Spleen (tissue), 13 donors: ENCODE measurements at regions of chr22 and their contacts with region 1.

Region 1: DNA sequence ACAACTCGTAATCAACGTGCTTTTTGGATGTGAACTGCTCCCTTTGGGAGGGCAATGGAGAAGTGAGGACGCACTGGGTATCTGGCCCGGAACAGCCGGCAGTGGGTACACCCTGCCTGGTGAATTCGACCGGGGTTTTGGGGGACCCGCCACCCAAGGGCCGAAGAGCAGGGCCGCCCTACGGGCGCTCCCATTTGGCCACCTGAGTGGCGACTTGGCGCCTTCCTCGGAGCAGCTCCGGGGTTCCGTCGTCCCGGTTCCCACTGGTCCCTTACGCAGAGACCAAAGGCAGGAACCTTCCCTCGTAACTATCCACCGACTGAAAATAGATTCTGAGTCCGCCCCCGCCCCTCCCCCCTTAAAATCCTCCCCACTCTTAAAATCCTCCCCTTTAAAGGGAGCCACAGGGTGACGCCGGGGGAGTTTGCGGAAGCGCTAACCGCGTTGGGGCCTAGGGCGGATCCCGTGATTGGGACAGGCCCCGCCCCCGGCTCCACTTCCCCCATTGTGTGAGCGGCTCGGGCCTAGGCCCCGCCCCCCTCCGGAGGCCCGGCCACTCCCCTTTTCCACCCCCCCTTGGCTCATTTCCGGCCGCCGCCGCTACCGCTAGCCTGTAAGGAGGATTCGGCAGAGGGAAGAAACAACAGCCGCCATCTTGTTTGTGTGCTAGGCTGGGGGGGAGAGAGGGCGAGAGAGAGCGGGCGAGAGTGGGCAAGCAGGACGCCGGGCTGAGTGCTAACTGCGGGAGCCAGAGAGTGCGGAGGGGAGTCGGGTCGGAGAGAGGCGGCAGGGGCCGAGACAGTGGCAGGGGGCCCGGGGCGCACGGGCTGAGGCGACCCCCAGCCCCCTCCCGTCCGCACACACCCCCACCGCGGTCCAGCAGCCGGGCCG is 1.0 kb upstream of the EP300 start:
- DNase-seq: peak; percentile 100
- H3K4me3 ChIP-seq: peak overlapping the region; percentile 72 to 92 (median 82)
- H3K27ac ChIP-seq: peak overlapping the region; percentile 99 to 100 (median 100)
- H3K4me1 ChIP-seq: peaks cover 22 to 44% (median 39%) of the 10 kb centered on the region in 6 donors
- H3K27me3 ChIP-seq: no peaks in the 10 kb centered on the region
- CTCF ChIP-seq: peak in 1 of 11 experiments; percentile 30
- POLR2A ChIP-seq: peak; percentile 62 to 86 (median 84)

Region 2: DNA sequence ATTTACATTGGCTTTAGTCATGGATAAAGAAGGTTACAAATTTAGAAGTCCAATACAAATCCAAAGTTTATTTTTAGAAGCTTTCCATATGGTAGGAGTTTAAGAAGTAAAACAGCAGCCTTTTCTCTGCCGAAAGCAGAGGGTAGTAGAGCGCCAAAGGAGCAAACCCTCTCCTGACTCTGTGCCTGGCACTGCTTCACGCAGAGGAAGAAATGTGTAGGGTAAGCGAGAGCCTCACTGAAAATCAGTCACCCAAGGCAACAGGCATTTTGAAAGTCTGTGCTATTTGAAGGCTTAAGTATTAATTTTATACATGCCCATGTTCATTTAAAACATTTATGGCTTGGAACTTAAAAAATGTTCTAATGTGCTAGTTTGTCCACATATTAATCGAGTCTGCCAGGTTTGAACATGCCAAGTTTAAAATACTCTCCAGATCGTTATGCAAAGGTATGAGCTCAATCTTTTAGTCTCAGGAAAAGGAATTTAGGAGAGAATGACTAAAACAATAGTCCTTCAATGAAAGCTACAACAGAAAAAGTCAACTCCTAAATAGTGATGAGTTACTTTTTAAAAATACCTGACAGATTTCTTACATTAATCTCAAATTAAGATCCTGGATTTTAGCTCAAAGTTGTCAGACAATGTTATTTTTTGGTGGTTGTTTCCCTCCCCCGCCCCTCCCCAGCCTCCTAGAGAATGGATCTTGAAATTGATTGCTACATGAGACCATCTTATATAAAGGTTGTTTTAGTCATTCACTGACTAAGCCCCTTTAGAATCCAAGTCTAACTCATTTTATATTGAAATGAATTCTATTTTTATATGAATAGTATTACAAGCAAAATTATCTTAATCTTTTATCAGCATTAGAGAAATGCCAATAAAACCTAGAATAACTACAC is 493.6 kb before region 1 on chr22:
- intact Hi-C with region 1: no loop called
- DNase-seq: no peak
- H3K4me3 ChIP-seq: no peak overlapping the region
- H3K27ac ChIP-seq: no peak overlapping the region
- H3K4me1 ChIP-seq: peaks cover 0 to 88% (median 51%) of the 10 kb centered on the region in 6 donors
- H3K27me3 ChIP-seq: no peaks in the 10 kb centered on the region
- CTCF ChIP-seq: no peak
- POLR2A ChIP-seq: no peak

Region 3: DNA sequence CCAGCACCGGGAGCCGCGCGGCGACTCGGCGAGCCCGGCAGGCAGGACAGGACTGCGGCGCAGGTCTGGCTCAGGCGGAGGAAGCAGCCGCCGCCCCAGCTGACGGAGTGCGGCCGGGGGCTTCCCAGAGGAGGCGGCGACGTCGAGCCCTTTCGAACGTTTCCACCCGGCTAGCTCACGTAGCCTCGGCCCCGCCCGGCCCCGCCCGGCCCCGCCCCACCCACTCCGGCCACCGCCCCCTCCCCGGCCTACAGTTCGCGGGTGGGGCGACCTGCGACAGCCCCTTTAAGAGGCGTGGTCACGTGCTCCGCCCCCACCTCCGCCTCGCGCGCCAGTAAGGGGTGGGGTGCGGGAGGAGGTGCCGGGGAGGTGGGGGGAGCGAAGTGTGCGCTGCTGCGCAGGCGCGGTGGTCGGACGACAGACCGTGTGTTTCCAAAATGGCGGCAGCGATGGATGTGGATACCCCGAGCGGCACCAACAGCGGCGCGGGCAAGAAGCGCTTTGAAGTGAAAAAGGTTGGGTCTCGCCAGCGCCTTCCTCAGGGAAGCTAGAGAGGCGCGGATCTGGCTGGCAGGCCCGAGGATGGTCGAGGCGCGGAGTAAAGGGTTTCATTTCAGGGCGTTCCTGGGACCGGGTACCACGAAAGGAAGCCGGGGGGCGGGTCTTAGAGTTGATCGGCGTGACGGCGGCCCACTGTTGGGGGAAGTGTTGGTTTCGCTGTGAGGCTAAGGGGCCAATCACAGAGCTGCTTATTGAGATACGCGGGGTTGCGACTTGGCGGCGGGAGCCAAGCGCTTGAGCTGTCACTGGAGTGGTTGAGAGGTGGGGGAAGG is 140.2 kb before region 1 on chr22 and contains the start of gene RBX1:
- intact Hi-C with region 1: loop called (anchors 2 kb)
- DNase-seq: peak; percentile 100
- H3K4me3 ChIP-seq: peak within 1 kb of the TSS; percentile 62 to 95 (median 80)
- H3K27ac ChIP-seq: peak within 1 kb of the TSS; percentile 88 to 99 (median 98)
- H3K4me1 ChIP-seq: peaks cover 15 to 58% (median 35%) of the 10 kb centered on the region in 6 donors
- H3K27me3 ChIP-seq: no peaks in the 10 kb centered on the region
- CTCF ChIP-seq: peak in 1 of 11 experiments; percentile 5
- POLR2A ChIP-seq: peak; percentile 78 to 95 (median 92)
- total RNA-seq, gene RBX1: 28.0 to 45.6 (median 40.7) TPM

Region 4: DNA sequence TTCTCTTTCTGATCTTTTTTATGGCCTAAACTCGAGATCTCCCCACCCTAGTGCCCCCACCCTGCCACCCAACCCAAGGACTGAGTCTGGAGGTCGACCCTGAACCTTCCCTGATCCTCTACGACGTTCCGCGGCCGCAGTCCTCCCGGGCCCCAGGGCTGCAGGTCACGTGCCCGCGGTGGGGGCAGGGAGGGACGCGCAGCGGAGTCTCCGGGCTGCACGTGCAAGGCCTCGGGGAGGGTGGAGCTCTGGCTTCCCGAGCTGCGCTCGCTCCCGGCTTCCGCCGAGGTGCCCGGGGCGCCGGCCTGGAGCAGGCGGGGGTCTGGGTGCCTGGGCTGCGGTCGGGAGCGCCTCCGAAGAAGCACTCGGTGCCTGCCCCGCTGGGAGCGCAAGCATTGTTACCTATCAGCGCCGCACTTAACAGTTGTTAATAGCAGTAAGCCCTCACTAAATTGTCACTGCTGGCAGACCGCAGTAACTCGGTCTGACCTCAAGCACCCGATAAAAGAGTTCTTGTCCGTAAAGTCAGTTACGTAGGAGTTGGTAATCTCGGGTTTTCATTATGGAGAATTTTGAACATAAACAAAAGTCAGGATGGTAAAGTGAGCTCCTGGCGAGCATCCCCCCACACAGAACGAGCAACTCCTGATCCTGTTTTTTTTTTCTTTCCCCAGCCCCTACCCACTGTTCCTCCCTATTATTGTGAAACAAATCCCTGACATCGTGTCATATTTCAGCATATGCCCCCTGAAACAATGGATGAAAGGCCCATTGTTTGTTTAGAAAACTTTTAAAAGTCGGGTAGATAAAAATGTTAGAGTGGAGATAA is 68.7 kb before region 1 on chr22:
- intact Hi-C with region 1: loop called (anchors 10 kb)
- DNase-seq: peak; percentile 98
- H3K4me3 ChIP-seq: peak overlapping the region; percentile 55 to 71 (median 67)
- H3K27ac ChIP-seq: peak overlapping the region; percentile 94 to 100 (median 98)
- H3K4me1 ChIP-seq: peaks cover 6 to 34% (median 19%) of the 10 kb centered on the region in 6 donors
- H3K27me3 ChIP-seq: no peaks in the 10 kb centered on the region
- CTCF ChIP-seq: peak in 2 of 11 experiments; percentile 5 to 18
- POLR2A ChIP-seq: peak in 2 of 3 donors; percentile 33 to 75

Region 5: GRCh38 chr22:41146573-41146972 is 55.2 kb after region 1 on chr22:
- intact Hi-C with region 1: no loop called
- DNase-seq: no peak
- H3K4me3 ChIP-seq: no peak overlapping the region
- H3K27ac ChIP-seq: no peak overlapping the region
- H3K4me1 ChIP-seq: no peaks in the 10 kb centered on the region
- H3K27me3 ChIP-seq: no peaks in the 10 kb centered on the region
- CTCF ChIP-seq: no peak
- POLR2A ChIP-seq: no peak